Left colon (tissue), 2 donors: ENCODE measurements at regions of chr6 and their contacts with region 1.

Region 1: DNA sequence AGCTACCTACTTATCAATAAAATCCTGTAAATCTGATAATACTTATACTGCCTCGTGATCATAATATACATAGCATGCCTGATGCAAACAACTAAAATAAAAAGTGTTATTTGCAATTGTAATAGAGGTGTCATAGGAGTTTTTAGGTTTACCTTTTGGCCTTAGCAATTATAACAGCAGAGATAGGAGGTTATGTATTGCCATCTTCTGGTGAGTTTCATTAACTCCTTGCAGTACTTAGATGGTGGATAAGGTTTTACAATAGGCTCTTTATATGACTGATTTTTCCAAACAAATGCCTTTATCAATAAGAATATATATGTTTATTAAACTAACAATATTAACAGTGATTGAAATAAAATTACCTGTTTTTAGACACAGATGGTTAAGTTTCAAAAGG is 27.8 kb upstream of the MYCT1 start:
- DNase-seq: no peak
- ATAC-seq: no peak

Region 2: DNA sequence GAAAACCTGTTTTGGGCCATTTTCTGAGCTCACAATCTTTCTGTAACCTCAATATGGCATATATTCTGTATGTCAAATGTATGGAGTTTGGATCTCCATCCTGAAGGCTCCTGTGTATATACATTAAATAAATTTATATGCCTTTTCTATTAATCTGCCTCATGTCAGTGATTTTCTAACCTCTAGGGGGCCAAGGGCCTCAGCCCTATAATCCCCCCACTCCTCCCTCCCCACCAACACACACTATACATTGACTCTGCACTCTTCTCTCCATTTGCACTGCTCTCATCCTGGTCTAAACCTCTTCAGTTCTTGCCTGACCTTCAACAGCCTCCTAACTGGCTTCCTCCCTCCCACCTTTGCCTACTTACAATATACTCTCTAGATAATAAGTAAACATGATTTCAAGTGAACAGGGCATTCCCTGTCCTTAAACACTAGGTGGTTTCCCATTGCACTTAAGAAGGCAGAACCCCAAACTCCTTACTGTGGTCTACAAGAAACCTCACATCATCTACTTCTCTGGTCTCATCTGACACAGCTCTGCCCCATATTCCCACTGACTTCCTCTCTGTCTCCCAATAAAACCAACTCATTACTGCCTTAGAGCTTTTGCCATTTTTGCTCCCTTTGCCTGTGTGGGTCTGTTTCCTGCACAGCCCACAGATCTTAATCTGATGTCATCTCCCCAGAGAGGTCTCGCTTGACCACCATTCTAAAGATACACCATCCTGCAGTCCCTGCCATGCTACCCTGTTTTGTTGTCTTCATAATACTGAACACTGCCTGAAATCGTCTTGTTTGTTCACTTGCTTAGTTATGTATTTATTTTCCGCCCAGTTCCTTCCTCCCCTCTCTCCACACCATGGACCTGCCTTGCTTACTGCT is 246.4 kb before region 1 on chr6:
- intact Hi-C with region 1: no loop called
- DNase-seq: no peak
- ATAC-seq: no peak

Region 3: DNA sequence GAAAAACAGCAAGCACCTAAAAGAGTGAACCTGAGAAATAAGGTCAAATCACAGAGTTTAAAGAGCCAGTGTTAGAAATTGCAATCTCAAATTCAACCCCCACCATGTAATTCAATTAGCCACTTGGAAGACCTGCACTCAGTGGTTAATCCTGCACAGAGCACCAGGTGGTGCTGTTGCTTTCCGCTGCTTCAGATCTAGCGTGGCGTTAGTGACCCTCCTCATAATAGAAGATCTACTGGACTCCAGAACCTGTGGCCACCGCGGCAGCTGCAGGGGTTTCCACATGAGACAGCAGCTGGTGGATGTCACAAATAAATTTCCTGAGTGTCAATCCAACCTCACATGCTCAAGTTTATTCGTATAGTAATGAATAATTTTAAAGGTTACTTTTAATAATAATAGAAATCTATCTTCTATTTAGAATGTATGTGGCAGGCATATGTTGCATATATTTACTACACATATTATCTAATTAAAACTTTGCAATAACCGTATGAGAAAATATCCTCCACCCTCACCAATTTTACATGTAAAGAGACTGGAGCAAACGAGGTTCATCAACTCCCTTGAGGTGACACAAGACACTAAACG is 117.2 kb before region 1 on chr6:
- intact Hi-C with region 1: loop called in 1 of 2 experiments (anchors 10 kb)
- DNase-seq: peak in 1 of 2 donors; percentile 11
- ATAC-seq: no peak

Region 4: GRCh38 chr6:152941746-152942145 is 271.9 kb after region 1 on chr6:
- intact Hi-C with region 1: no loop called
- DNase-seq: no peak
- ATAC-seq: no peak

Region 5: DNA sequence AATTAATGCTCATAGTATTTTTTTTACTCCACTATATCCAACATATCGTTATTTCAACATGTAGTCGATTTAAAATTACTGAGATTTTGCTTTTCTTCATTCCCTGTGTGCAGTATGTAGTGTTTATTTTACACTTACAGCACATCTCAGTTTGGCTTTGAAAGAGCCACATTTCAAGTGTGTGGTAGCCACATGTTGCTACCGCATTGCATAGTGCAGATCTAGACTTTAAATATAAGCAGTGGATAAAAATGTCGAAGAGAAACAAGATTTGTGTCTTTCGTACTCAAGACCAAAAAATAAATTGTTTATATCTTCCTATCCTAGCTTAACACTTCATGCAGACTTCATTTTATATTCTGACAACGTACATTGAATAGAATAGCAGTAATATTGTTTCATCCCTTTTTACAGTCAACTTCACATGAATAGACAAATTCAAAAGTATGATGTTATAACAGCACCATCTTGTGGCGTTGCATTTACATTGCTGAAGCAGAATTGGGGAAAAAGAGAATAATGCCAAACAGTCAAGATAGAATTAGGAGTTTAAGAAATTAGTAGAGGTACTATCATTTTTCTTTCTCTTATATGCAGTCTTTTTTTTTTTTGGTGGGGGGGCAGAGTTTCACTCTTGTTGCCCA is 283.1 kb after region 1 on chr6:
- intact Hi-C with region 1: no loop called
- DNase-seq: no peak
- ATAC-seq: no peak

Region 6: DNA sequence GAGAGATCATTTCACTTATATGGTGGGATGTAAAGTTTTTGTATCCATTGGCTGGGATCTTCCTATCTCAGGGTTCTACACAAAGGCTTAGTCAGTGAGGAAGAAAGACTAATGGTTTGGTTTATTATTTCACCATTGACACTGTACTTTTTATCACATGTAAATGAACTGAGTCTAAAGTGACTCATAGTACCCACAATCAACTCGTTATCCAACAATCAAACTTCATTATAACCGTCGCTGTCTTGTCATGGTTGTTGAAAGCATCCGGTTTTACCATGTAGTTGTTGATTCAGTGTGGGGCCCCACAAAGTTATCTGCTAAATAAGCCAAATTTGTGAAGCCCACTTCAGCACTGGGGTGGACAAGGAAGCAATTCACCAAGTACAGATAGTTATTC is 388.4 kb after region 1 on chr6:
- intact Hi-C with region 1: no loop called
- DNase-seq: no peak
- ATAC-seq: no peak